Activated T-helper 2 cell treated with anti-CD3 and anti-CD28 coated beads, Interferon-gamma antibody, Interleukin-2, Interleukin-4, amounts not matched to agents 10 μg/mL and 5 μg/mL and 100 μg/mL, durations not matched to agents 14 hours and 24 hours and 36 hours (primary cell): ENCODE measurements at regions of chr12 and their contacts with region 1.

Region 1: GRCh38 chr12:56104109-56104814 is at the start of gene PA2G4:
- DNase-seq: peak; percentile 99
- H3K4me3 Mint-ChIP-seq: peak within 1 kb of the TSS; percentile 92
- H3K27ac Mint-ChIP-seq: peak within 1 kb of the TSS; percentile 95
- H3K4me1 Mint-ChIP-seq: peaks cover 51% of the 10 kb centered on the region
- H3K27me3 Mint-ChIP-seq: no peaks in the 10 kb centered on the region
- total RNA-seq, gene PA2G4: 356 and 364 TPM in 2 replicates

Region 2: GRCh38 chr12:55829967-55830600 is 274.2 kb before region 1 on chr12:
- intact Hi-C with region 1: loop called (anchors 1 kb)
- DNase-seq: peak; percentile 16
- H3K4me3 Mint-ChIP-seq: peak overlapping the region; percentile 97
- H3K27ac Mint-ChIP-seq: peak overlapping the region; percentile 89
- H3K4me1 Mint-ChIP-seq: peaks cover 36% of the 10 kb centered on the region
- H3K27me3 Mint-ChIP-seq: no peaks in the 10 kb centered on the region

Region 3: GRCh38 chr12:55996715-55997534 is 107.3 kb before region 1 on chr12 and contains the start of gene SUOX:
- intact Hi-C with region 1: loop called (anchors 5 kb)
- DNase-seq: peak; percentile 54
- H3K4me3 Mint-ChIP-seq: peak within 1 kb of the TSS; percentile 84
- H3K27ac Mint-ChIP-seq: peak within 1 kb of the TSS; percentile 46
- H3K4me1 Mint-ChIP-seq: peaks cover 24% of the 10 kb centered on the region
- H3K27me3 Mint-ChIP-seq: no peaks in the 10 kb centered on the region
- total RNA-seq, gene SUOX: 19.9 and 21.2 TPM in 2 replicates

Region 4: GRCh38 chr12:56127888-56128669 is 23.8 kb after region 1 on chr12 and contains the start of gene ESYT1:
- intact Hi-C with region 1: loop called (anchors 1 kb)
- DNase-seq: peak; percentile 99
- H3K4me3 Mint-ChIP-seq: peak within 1 kb of the TSS; percentile 98
- H3K27ac Mint-ChIP-seq: peak within 1 kb of the TSS; percentile 91
- H3K4me1 Mint-ChIP-seq: peaks cover 52% of the 10 kb centered on the region
- H3K27me3 Mint-ChIP-seq: no peaks in the 10 kb centered on the region
- total RNA-seq, gene ESYT1: 154 TPM in 2 replicates

Region 5: DNA sequence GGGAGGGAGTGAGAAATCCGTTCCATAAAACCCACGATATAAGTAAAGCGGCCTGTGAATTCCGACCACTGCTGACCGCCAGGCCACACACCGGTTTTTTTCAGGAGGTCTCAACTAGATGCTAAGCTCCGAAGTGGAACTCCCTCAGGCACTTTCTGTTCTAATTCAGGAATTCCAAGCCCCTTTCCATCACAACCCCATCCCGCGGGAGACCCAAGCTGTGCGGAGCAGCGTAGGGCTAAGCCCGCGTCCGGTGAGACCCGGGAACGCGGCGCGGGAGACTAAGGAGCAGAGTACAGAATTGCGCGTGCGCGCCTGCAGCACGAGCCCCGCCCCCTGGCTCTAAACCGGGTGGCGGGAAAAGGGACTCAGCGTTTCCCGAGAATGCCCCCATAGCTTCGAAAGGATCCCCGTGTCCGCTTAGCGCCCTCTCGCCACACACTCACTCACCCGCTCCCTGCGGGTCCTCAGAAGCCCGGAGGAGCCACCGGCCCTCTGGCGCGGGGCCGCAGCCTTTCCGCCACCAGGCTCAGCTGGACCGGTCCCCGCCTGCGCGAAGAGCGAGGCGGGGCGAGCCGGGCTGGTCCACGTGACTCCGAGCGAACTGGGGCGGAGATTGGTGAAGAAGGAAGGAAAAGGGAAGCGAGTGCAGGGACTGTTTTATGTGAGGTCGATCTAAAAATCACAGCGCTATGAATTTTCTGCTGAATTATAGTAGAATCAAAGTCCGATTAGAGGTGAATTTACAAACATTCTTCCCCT is 344.8 kb after region 1 on chr12 and contains the start of gene TIMELESS:
- intact Hi-C with region 1: loop called (anchors 5 kb)
- DNase-seq: peak; percentile 88
- H3K4me3 Mint-ChIP-seq: peak within 1 kb of the TSS; percentile 86
- H3K27ac Mint-ChIP-seq: peak within 1 kb of the TSS; percentile 86
- H3K4me1 Mint-ChIP-seq: peaks cover 24% of the 10 kb centered on the region
- H3K27me3 Mint-ChIP-seq: no peaks in the 10 kb centered on the region
- total RNA-seq, gene TIMELESS: 43.7 and 45.6 TPM in 2 replicates